Tibial artery (tissue), 4 donors: ENCODE measurements at regions of chr13 and their contacts with region 1.

Region 1: DNA sequence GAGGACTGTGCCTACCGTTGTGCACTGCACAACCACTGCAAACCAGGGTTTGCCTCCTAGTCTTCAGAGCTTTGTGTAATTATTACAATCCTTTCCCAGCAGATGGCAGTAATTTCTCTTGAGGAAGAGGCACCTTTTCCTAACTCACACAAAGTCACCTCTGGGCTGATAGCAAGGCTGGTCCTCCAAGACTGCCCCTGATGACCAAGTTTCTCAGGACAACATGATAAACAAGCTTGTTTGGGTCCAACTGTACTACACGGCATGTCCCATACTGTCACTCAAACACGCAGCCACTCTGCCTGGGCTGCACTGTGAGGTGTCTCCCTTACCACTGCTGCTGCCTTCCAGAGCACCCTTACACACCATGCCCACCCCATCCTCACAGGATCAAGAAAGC is 39.3 kb downstream of the RFXAP start:
- DNase-seq: no peak
- H3K4me3 ChIP-seq: no peak overlapping the region
- H3K27ac ChIP-seq: no peak overlapping the region
- H3K4me1 ChIP-seq: no peaks in the 10 kb centered on the region
- H3K27me3 ChIP-seq: no peaks in the 10 kb centered on the region
- CTCF ChIP-seq: peak; percentile 34 to 44

Region 2: GRCh38 chr13:36841391-36841790 is 16.9 kb before region 1 on chr13:
- intact Hi-C with region 1: no loop called
- DNase-seq: no peak
- H3K4me3 ChIP-seq: no peak overlapping the region
- H3K27ac ChIP-seq: no peak overlapping the region
- H3K4me1 ChIP-seq: no peaks in the 10 kb centered on the region
- H3K27me3 ChIP-seq: no peaks in the 10 kb centered on the region
- CTCF ChIP-seq: no peak

Region 3: GRCh38 chr13:36981156-36981743 is 123.0 kb after region 1 on chr13:
- intact Hi-C with region 1: loop called (anchors 1 kb)
- DNase-seq: no peak
- H3K4me3 ChIP-seq: no peak overlapping the region
- H3K27ac ChIP-seq: no peak overlapping the region
- H3K4me1 ChIP-seq: peaks cover 0 to 3% (median 0%) of the 10 kb centered on the region in 4 donors
- H3K27me3 ChIP-seq: no peaks in the 10 kb centered on the region
- CTCF ChIP-seq: peak; percentile 56 to 60